ENCODE measurements at regions of chr3 and their contacts with region 1.

Region 1: GRCh38 chr3:179347345-179348194 is at the start of gene MFN1:
- DNase-seq: peak; percentile 93
- H3K4me3 ChIP-seq: peak within 1 kb of the TSS; percentile 76
- H3K27ac ChIP-seq: peak within 1 kb of the TSS; percentile 67
- H3K4me1 ChIP-seq: peaks cover 26% of the 10 kb centered on the region
- CTCF ChIP-seq: no peak
- total RNA-seq, gene MFN1: 23.0 and 31.7 TPM in 2 replicates

Region 2: GRCh38 chr3:179438841-179439240 is 91.3 kb after region 1 on chr3:
- CTCF ChIA-PET with region 1: no interaction called
- POLR2A ChIA-PET with region 1: interaction called, 5 read pairs
- intact Hi-C with region 1: loop called (anchors 5 kb)
- DNase-seq: peak; percentile 94
- H3K4me3 ChIP-seq: peak overlapping the region; percentile 41
- H3K27ac ChIP-seq: peak overlapping the region; percentile 72
- H3K4me1 ChIP-seq: peaks cover 27% of the 10 kb centered on the region
- CTCF ChIP-seq: no peak

Region 3: DNA sequence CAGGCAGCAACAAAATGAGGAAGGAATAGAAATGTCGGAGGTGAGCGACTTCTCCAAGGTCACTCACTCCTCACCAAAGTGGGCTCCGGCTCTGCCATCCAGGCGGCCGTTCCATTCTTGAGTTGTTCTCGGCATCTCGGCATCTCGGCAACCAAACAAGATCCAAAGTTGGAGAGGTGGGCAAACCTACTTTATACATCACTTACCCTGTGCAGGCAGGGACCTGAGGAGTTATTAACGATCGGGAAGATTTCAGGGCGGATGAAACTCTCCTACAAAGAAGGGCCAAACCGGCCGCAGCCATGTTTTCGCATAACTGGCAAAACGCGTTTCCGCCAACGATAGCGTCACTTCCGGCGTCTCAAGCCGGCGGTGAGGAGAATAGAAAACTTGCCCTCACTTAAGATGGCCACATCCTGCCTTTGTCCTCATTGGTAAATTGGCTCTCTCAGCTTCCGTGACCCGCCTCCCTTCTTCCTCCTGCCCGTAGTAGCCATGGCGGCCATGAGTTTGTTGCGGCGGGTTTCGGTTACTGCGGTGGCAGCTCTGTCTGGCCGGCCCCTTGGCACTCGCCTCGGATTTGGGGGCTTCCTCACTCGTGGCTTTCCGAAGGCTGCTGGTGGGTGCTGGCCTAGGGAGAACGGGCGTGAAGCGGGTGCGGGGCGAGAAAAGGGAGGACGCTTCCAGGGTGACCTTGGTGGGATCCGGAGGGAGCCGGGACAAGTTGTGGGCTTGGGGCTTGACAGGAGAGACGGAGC is 256.9 kb after region 1 on chr3 and contains the starts of genes MRPL47 and NDUFB5:
- CTCF ChIA-PET with region 1: no interaction called
- POLR2A ChIA-PET with region 1: interaction called, 3 read pairs
- intact Hi-C with region 1: loop called (anchors 1 kb)
- DNase-seq: peak; percentile 96
- H3K4me3 ChIP-seq: peak within 1 kb of the TSS; percentile 87
- H3K27ac ChIP-seq: peak within 1 kb of the TSS; percentile 74
- H3K4me1 ChIP-seq: peaks cover 51% of the 10 kb centered on the region
- CTCF ChIP-seq: no peak
- total RNA-seq, gene MRPL47: 25.9 and 50.4 TPM in 2 replicates
- total RNA-seq, gene NDUFB5: 81.5 and 84.1 TPM in 2 replicates

Region 4: DNA sequence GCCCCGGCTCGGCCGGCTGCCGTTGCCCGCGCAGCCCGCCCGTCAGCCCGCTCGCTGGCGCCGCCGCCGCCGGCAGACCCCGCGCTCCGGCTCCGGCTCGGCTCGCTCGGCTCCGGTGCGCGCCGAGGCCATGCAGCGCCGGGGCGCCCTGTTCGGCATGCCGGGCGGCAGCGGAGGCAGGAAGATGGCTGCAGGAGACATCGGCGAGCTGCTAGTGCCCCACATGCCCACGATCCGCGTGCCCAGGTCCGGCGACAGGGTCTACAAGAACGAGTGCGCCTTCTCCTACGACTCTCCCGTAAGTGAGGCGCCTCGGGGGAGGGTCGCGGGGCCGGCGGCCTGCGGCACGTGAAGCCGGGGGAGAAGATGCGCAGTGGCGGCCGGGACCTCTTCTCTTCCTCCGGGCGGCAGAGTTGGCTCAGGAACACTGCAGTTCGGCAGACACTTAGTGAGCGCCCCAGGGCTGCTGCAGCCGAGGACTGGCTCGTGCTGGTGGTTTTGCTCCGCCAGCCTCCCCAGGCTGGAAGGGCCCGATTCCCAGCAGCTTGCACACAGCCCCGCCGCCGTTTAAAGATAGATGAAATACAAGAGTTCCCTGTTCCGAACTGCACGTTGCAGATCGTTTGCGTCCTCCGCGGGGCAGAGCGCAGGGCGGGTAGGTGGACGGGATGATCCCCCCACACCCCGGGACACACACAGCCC is 305.7 kb after region 1 on chr3:
- CTCF ChIA-PET with region 1: no interaction called
- POLR2A ChIA-PET with region 1: interaction called, 3 read pairs
- intact Hi-C with region 1: loop called (anchors 5 kb)
- DNase-seq: peak; percentile 84
- H3K4me3 ChIP-seq: peak overlapping the region; percentile 96
- H3K27ac ChIP-seq: peak overlapping the region; percentile 81
- H3K4me1 ChIP-seq: peaks cover 32% of the 10 kb centered on the region
- CTCF ChIP-seq: peak; percentile 25; the same call in 1 of the 2 replicates